Posterior vena cava (tissue), 2 donors: ENCODE measurements at regions of chr7 and their contacts with region 1.

Region 1: GRCh38 chr7:74306730-74307469 is 17.7 kb downstream of the CLIP2 start:
- DNase-seq: no peak

Region 2: DNA sequence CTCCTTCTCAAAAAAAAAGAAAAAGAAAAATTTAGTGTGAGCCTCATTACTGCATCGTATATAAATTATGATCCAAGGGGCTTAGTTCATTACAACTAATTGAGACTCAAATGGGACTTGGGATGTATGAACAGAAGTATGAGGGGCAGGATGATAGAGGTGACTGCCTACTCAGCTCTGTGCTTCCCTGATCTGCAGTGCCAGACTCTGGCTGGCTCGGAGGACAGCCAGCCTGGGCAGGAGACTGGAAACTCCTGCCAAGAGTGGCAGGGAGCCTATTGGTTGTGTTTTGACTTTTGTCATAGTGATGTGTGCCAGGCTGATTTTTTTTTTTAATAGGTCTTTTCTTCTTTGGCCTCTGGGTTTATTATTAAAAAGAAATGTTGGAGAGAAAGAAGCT is 73.0 kb after region 1 on chr7:
- intact Hi-C with region 1: loop called in 1 of 2 experiments (anchors 10 kb)
- DNase-seq: no peak